Activated CD4-positive, alpha-beta memory T cell treated with anti-CD3 and anti-CD28 coated beads for 36 hours (primary cell): ENCODE measurements at regions of chr6 and their contacts with region 1.

Region 1: GRCh38 chr6:34392497-34393190 is at the start of gene NUDT3:
- DNase-seq: peak; percentile 96
- H3K4me3 Mint-ChIP-seq: peak within 1 kb of the TSS; percentile 57
- H3K27ac Mint-ChIP-seq: peak within 1 kb of the TSS; percentile 87
- H3K4me1 Mint-ChIP-seq: peaks cover 21% of the 10 kb centered on the region
- H3K27me3 Mint-ChIP-seq: no peaks in the 10 kb centered on the region
- total RNA-seq, gene NUDT3: 12.7 to 13.4 TPM

Region 2: DNA sequence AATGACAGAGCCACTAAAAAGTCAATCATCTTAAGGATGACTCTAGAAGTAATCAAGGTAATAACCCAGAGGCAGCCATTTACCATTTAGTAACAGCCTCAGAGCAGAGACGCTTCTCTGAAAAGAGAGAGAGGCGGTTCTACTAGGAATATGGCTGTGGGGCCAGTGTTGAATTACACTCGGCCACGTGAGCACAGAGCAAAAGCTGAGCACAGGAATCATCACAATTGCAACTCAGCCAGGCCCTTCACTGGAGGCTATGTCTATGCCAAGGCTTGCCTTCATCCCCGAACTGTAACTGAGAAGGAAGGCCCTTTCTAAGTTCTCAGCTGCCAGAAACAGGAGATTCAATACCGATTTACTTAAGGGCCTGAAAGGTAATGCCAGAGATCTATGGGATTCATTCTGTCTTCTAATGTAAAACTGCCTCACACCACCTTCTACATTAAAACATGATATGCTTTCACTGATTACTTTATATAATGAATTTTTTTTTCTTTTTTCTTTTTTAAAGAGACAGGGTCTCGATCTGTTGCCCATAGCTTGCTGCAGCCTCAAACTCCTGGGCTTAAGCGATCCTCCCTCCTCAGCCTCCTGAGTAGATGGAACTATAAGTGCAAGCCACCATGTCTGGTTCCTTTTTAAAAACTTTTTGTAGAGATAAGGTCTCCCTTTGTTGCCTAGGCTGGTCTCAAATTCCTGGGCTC is 67.8 kb before region 1 on chr6:
- CTCF ChIA-PET with region 1: no interaction called
- POLR2A ChIA-PET with region 1: no interaction called
- intact Hi-C with region 1: loop called (anchors 10 kb)
- DNase-seq: no peak
- H3K4me3 Mint-ChIP-seq: no peak overlapping the region
- H3K27ac Mint-ChIP-seq: no peak overlapping the region
- H3K4me1 Mint-ChIP-seq: peaks cover 11% of the 10 kb centered on the region
- H3K27me3 Mint-ChIP-seq: no peaks in the 10 kb centered on the region

Region 3: GRCh38 chr6:34425498-34426410 is 33.1 kb after region 1 on chr6 and contains the start of gene RPS10:
- CTCF ChIA-PET with region 1: interaction called, 3 read pairs
- POLR2A ChIA-PET with region 1: no interaction called
- intact Hi-C with region 1: loop called (anchors 5 kb)
- DNase-seq: peak; percentile 94
- H3K4me3 Mint-ChIP-seq: peak within 1 kb of the TSS; percentile 99
- H3K27ac Mint-ChIP-seq: peak within 1 kb of the TSS; percentile 99
- H3K4me1 Mint-ChIP-seq: peaks cover 40% of the 10 kb centered on the region
- H3K27me3 Mint-ChIP-seq: no peaks in the 10 kb centered on the region
- total RNA-seq, gene RPS10: 2,106 to 2,169 TPM